Activated T-helper 1 cell treated with anti-CD3 and anti-CD28 coated beads, Interleukin-12 subunit alpha, Interleukin-12 subunit beta, Interleukin-2, Interleukin-4 antibody, amounts not matched to agents 30 ng/mL and 10 ng/mL and 1 ng/mL, durations not matched to agents 14 hours and 24 hours and 36 hours (primary cell): ENCODE measurements at regions of chr19 and their contacts with region 1.

Region 1: GRCh38 chr19:44113138-44113783 is at the start of gene ZNF225:
- DNase-seq: peak; percentile 81
- H3K4me3 Mint-ChIP-seq: peak within 1 kb of the TSS; percentile 100
- H3K27ac Mint-ChIP-seq: peak within 1 kb of the TSS; percentile 88
- H3K4me1 Mint-ChIP-seq: peaks cover 30% of the 10 kb centered on the region
- H3K27me3 Mint-ChIP-seq: no peaks in the 10 kb centered on the region
- total RNA-seq, gene ZNF225: 3.8 and 5.0 TPM in 2 replicates

Region 2: DNA sequence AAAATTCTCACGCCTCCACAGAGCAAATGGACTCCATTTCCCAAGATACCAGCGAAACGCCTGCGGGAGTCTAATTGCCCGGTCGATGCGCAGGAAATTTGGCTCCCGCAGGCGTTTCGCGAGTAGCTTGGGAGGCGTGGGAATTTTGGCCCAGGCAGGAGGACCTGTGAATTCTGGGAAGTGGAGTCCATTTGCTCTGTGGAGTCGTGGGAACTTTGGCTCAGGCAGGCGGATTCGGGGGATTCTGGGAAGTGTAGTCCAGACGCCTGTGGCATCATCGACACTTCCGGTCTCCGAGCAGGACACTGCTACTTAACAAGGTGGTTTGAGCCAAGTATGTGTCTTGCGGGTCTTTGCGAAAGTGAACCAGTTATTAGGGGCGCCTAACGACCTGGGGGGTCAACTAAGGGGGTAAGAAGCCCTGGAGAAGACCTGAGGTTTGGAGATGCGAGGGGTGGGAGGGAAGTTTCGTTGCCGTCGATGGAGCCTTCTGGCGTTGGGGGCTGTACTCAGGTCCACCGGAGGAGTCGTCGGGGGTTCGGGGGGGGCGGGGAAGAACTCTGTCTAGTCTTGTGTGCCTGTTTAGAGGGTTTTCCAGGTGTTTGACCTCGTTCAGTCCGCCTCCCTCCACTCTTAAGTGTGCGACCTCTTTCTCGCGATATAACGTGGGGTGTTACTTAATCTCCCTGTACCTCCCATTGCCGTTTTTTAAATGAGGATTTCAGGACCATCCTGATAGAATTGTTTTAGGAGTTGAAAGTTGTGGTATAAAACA is 129.2 kb before region 1 on chr19 and contains the start of gene ZNF155:
- intact Hi-C with region 1: loop called (anchors 5 kb)
- DNase-seq: peak; percentile 56
- H3K4me3 Mint-ChIP-seq: peak within 1 kb of the TSS; percentile 94
- H3K27ac Mint-ChIP-seq: peak within 1 kb of the TSS; percentile 88
- H3K4me1 Mint-ChIP-seq: peaks cover 8% of the 10 kb centered on the region
- H3K27me3 Mint-ChIP-seq: no peaks in the 10 kb centered on the region
- total RNA-seq, gene ZNF155: 5.2 and 6.5 TPM in 2 replicates

Region 3: DNA sequence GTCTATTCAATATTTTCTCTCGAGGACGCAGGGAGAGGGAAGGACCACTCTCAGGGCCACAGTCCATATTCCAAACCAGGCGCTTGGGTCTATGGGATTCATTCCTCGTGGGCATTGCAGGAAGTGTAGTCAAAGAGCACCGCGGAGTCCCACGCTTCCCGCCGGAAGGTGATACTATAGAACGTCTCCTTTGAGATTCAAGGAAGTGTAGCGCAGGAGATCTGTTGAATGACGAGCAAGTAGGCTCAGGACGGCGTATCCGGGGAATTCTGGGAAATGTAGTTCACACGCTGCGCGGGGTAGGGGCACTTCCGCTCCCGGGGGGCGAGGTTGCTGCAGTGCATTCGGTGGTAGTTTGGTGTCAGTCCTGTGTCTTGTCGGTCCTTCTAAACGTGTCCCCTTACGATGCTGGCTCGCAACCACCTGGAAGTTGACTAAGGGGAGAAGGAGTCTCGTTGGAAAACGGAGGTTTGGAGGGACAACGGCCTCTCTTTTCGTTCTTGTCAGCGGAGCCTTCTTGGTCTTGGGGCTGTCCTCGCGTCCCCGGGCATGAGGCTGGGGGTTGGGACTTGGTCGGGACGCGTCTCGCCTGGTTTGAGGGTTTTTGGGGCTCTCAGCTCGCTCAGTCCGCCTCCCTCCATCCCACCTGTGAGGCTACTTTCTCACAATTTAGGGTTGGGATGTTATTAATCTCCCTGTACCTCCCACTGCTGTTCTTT is 41.3 kb before region 1 on chr19 and contains the start of gene ZNF284:
- intact Hi-C with region 1: loop called (anchors 1 kb)
- DNase-seq: peak; percentile 74
- H3K4me3 Mint-ChIP-seq: peak within 1 kb of the TSS; percentile 86
- H3K27ac Mint-ChIP-seq: peak within 1 kb of the TSS; percentile 79
- H3K4me1 Mint-ChIP-seq: peaks cover 17% of the 10 kb centered on the region
- H3K27me3 Mint-ChIP-seq: no peaks in the 10 kb centered on the region
- total RNA-seq, gene ZNF284: 1.3 and 1.4 TPM in 2 replicates

Region 4: GRCh38 chr19:44141191-44142058 is 28.2 kb after region 1 on chr19 and contains the start of gene ZNF234:
- intact Hi-C with region 1: loop called (anchors 1 kb)
- DNase-seq: peak; percentile 52
- H3K4me3 Mint-ChIP-seq: peak within 1 kb of the TSS; percentile 93
- H3K27ac Mint-ChIP-seq: peak within 1 kb of the TSS; percentile 76
- H3K4me1 Mint-ChIP-seq: peaks cover 14% of the 10 kb centered on the region
- H3K27me3 Mint-ChIP-seq: no peaks in the 10 kb centered on the region
- total RNA-seq, gene ZNF234: 8.4 and 10.3 TPM in 2 replicates

Region 5: GRCh38 chr19:44151491-44151890 is 38.2 kb after region 1 on chr19:
- intact Hi-C with region 1: no loop called
- DNase-seq: no peak
- H3K4me3 Mint-ChIP-seq: no peak overlapping the region
- H3K27ac Mint-ChIP-seq: no peak overlapping the region
- H3K4me1 Mint-ChIP-seq: no peaks in the 10 kb centered on the region
- H3K27me3 Mint-ChIP-seq: no peaks in the 10 kb centered on the region

Region 6: DNA sequence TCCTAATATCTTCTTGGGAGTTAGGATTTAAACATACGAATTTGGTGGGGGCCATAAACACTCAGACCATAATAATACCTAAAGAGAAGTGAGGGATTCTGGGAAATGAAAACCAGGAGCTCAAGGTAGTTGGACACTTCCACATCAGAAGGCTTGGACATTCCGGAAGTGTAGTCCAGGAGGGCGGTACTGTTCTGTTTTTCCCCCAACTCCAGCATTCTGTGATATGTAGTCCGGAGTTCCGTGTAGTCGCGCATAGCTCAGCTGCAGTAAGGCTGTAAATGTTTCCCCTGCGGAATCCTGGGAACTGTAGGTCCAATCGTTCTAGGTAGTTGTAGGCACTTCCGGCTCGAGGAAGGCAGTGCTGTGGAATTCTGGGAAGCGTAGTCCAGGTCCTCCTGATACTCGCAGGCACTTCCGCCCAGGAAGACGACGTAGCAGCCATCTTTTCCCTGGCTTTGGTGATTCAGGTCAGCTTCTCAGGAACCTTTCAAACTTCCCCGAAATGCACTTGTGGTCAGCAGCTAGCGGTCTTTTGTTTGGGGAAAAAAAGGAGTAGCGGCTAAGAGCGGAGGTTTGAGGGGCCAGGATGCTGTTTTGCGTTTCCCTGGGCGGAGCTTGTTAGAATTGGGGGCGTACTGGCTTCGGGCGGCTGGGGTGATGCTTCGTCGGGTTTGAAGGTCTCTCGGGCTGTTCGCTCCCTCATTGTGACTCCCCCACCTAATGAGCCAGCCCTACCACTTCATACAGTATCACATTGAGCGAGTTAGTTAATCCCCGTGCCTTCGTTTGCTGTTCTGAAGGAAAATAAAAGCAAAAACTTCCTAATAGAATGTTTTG is 51.6 kb after region 1 on chr19 and contains the start of gene ZNF226:
- intact Hi-C with region 1: loop called (anchors 1 kb)
- DNase-seq: peak; percentile 71
- H3K4me3 Mint-ChIP-seq: peak within 1 kb of the TSS; percentile 90
- H3K27ac Mint-ChIP-seq: peak within 1 kb of the TSS; percentile 84
- H3K4me1 Mint-ChIP-seq: peaks cover 29% of the 10 kb centered on the region
- H3K27me3 Mint-ChIP-seq: no peaks in the 10 kb centered on the region
- total RNA-seq, gene ZNF226: 10.5 and 11.6 TPM in 2 replicates

Region 7: GRCh38 chr19:44190020-44190419 is 76.8 kb after region 1 on chr19:
- intact Hi-C with region 1: no loop called
- DNase-seq: no peak
- H3K4me3 Mint-ChIP-seq: no peak overlapping the region
- H3K27ac Mint-ChIP-seq: no peak overlapping the region
- H3K4me1 Mint-ChIP-seq: no peaks in the 10 kb centered on the region
- H3K27me3 Mint-ChIP-seq: no peaks in the 10 kb centered on the region

Region 8: GRCh38 chr19:44304659-44305193 is 191.5 kb after region 1 on chr19 and contains the start of gene ZNF235:
- intact Hi-C with region 1: loop called (anchors 1 kb)
- DNase-seq: peak; percentile 60
- H3K4me3 Mint-ChIP-seq: peak within 1 kb of the TSS; percentile 90
- H3K27ac Mint-ChIP-seq: peak within 1 kb of the TSS; percentile 34
- H3K4me1 Mint-ChIP-seq: peaks cover 20% of the 10 kb centered on the region
- H3K27me3 Mint-ChIP-seq: no peaks in the 10 kb centered on the region
- total RNA-seq, gene ZNF235: 3.8 and 4.7 TPM in 2 replicates

Region 9: GRCh38 chr19:44345959-44346358 is 232.7 kb after region 1 on chr19:
- intact Hi-C with region 1: no loop called
- DNase-seq: no peak
- H3K4me3 Mint-ChIP-seq: no peak overlapping the region
- H3K27ac Mint-ChIP-seq: no peak overlapping the region
- H3K4me1 Mint-ChIP-seq: no peaks in the 10 kb centered on the region
- H3K27me3 Mint-ChIP-seq: no peaks in the 10 kb centered on the region